Breast epithelium (tissue), 4 donors: ENCODE measurements at regions of chr14 and their contacts with region 1.

Region 1: GRCh38 chr14:71956920-71957563 is 24.8 kb downstream of the RGS6 start:
- DNase-seq: no peak
- H3K4me3 ChIP-seq: no peak overlapping the region
- H3K27ac ChIP-seq: no peak overlapping the region
- H3K4me1 ChIP-seq: no peaks in the 10 kb centered on the region
- H3K27me3 ChIP-seq: no peaks in the 10 kb centered on the region
- CTCF ChIP-seq: no peak
- POLR2A ChIP-seq: no peak

Region 2: GRCh38 chr14:71883094-71883766 is 73.8 kb before region 1 on chr14:
- intact Hi-C with region 1: loop called (anchors 2 kb)
- DNase-seq: no peak
- H3K4me3 ChIP-seq: no peak overlapping the region
- H3K27ac ChIP-seq: no peak overlapping the region
- H3K4me1 ChIP-seq: no peaks in the 10 kb centered on the region
- H3K27me3 ChIP-seq: no peaks in the 10 kb centered on the region
- CTCF ChIP-seq: no peak
- POLR2A ChIP-seq: no peak

Region 3: DNA sequence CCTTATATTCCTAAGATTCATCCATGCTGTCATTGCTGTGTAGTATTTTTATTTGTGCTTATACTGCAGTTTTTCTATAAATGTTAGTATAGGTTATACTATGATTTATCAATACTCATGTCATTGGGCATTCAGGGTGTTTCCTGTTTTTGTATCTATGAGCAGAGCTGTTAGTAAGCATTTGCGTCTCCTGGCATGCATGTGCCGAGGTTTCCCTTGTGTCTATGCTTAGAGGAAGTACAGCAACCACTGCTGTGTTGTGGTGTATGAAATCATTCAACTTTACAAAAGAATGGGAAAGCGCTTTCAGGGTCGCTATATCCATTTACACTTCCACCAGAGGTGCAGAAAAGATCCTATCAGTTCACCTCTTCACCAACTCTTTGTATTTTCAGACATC is 97.9 kb after region 1 on chr14:
- intact Hi-C with region 1: loop called (anchors 5 kb)
- DNase-seq: no peak
- H3K4me3 ChIP-seq: no peak overlapping the region
- H3K27ac ChIP-seq: no peak overlapping the region
- H3K4me1 ChIP-seq: no peaks in the 10 kb centered on the region
- H3K27me3 ChIP-seq: no peaks in the 10 kb centered on the region
- CTCF ChIP-seq: no peak
- POLR2A ChIP-seq: no peak

Region 4: GRCh38 chr14:72755766-72756165 is 798.7 kb after region 1 on chr14:
- intact Hi-C with region 1: loop called (anchors 5 kb)
- DNase-seq: no peak
- H3K4me3 ChIP-seq: no peak overlapping the region
- H3K27ac ChIP-seq: no peak overlapping the region
- H3K4me1 ChIP-seq: no peaks in the 10 kb centered on the region
- H3K27me3 ChIP-seq: no peaks in the 10 kb centered on the region
- CTCF ChIP-seq: no peak
- POLR2A ChIP-seq: no peak